Heart left ventricle (tissue), 16 donors: ENCODE measurements at regions of chr3 and their contacts with region 1.

Region 1: GRCh38 chr3:10026084-10026890 is at the start of gene FANCD2:
- DNase-seq: peak; percentile 86 to 95 (median 90)
- ATAC-seq: peak; percentile 89 to 99 (median 96)
- H3K4me3 ChIP-seq: peak within 1 kb of the TSS; percentile 61 to 97 (median 82)
- H3K27ac ChIP-seq: peak within 1 kb of the TSS in 11 of 12 donors; percentile 68 to 86 (median 76)
- H3K4me1 ChIP-seq: peaks cover 0 to 32% (median 20%) of the 10 kb centered on the region in 12 donors
- H3K27me3 ChIP-seq: no peaks in the 10 kb centered on the region
- CTCF ChIP-seq: no peak
- POLR2A ChIP-seq: peak in 1 of 2 donors; percentile 66
- total RNA-seq, gene FANCD2: 0.12 to 4.4 (median 0.97) TPM

Region 2: DNA sequence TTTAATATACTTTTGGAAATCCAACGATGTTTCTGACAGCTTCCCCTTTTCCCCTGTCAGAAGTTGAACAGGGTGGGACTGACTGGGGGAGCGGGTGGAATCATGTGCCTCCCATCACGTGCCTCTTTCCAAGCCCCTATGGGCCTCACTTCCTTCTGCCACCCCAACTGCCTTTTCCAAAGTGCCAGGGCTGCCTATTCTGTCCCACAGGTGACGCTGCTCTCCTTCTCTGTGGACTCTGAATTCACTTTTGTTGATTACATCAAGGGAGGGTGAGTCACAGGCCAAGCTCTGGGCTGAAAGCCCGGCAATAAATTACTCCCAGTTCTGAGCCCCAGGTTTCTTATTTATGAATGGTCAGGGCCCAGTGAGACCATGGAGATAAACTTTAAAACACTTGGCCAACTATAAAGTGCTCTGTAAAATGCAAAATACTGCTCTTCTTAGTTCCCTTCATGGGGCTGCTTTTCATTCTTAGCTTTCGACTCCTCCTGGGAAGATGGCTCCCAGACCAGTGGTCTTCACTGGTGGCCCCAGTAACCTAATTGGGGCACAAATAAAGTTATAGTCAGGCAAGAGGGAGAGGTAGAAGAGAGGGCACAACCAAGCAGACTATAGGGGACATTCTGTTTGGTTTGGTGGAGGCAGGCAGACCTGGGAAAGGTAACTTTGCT is 310.4 kb before region 1 on chr3:
- intact Hi-C with region 1: loop called in 1 of 10 experiments (anchors 10 kb)
- DNase-seq: peak in 4 of 5 donors; percentile 70 to 77 (median 72)
- ATAC-seq: peak; percentile 56 to 97 (median 94)
- H3K4me3 ChIP-seq: no peak overlapping the region
- H3K27ac ChIP-seq: peak overlapping the region in 4 of 12 donors; percentile 39 to 75 (median 60)
- H3K4me1 ChIP-seq: peaks cover 0 to 21% (median 0%) of the 10 kb centered on the region in 12 donors
- H3K27me3 ChIP-seq: no peaks in the 10 kb centered on the region
- CTCF ChIP-seq: peak; percentile 38 to 75 (median 56)
- POLR2A ChIP-seq: no peak

Region 3: GRCh38 chr3:9986237-9986725 is 40.0 kb before region 1 on chr3:
- intact Hi-C with region 1: loop called in 3 of 10 experiments (anchors 2 to 5 kb)
- DNase-seq: no peak
- ATAC-seq: peak; percentile 38 to 69 (median 54)
- H3K4me3 ChIP-seq: peak overlapping the region; percentile 60 to 100 (median 96)
- H3K27ac ChIP-seq: peak overlapping the region in 11 of 12 donors; percentile 71 to 88 (median 84)
- H3K4me1 ChIP-seq: peaks cover 2 to 33% (median 24%) of the 10 kb centered on the region in 12 donors
- H3K27me3 ChIP-seq: no peaks in the 10 kb centered on the region
- CTCF ChIP-seq: no peak
- POLR2A ChIP-seq: no peak

Region 4: DNA sequence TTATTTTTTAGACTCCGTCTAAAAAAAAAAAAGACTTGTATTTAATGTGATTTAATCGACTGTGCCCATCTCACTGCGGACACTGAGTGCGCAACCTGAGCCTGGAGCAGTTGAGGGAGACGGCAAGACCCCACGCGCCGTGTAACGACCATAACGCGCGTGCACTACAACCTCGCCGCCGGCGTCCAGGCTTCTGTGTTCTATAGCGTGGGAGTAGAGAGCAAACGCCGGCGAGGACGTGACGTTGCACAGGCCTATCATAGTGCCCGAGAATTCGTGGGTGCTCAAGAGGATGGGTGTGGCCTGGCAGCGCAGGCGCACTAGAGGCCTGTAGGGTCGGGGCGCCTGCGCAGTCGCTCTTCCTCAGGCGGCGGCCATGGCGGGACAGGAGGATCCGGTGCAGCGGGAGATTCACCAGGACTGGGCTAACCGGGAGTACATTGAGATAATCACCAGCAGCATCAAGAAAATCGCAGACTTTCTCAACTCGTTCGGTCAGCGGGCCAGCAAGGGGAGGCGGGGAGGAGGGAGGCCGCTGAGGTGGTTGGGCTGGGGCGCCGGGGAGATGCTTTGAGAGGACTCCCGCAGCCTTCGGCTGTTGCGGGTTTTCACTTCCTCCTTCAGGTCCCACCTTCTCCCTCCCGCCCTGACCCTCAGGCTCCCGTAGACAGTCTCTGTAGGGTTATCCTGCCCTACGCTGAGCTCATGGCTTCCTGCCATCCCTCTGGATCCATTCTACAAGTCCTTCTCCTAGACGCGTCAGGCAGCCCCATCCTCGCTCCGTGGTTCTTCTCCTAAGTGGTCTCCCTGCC is 89.2 kb after region 1 on chr3 and contains the start of gene BRK1:
- intact Hi-C with region 1: loop called in 3 of 10 experiments (anchors 2 to 10 kb)
- DNase-seq: peak; percentile 94 to 98 (median 97)
- ATAC-seq: peak; percentile 100
- H3K4me3 ChIP-seq: peak within 1 kb of the TSS; percentile 60 to 97 (median 92)
- H3K27ac ChIP-seq: peak within 1 kb of the TSS; percentile 35 to 89 (median 84)
- H3K4me1 ChIP-seq: peaks cover 0 to 49% (median 30%) of the 10 kb centered on the region in 12 donors
- H3K27me3 ChIP-seq: no peaks in the 10 kb centered on the region
- CTCF ChIP-seq: no peak
- POLR2A ChIP-seq: peak; percentile 44 to 94
- total RNA-seq, gene BRK1: 69.8 to 109 (median 89.8) TPM